ENCODE measurements at regions of chr1 and their contacts with region 1.

Region 1: GRCh38 chr1:2545759-2546514 is 10.2 kb upstream of the TNFRSF14 start:
- DNase-seq: peak; percentile 83 to 91 (median 86)
- ATAC-seq: peak; percentile 74
- H3K4me3 ChIP-seq: peak overlapping the region; percentile 88
- H3K4me3 Mint-ChIP-seq: peak overlapping the region; percentile 27 to 97 (median 94)
- H3K27ac ChIP-seq: peak overlapping the region; percentile 97
- H3K27ac Mint-ChIP-seq: peak overlapping the region in 8 of 9 donors; percentile 28 to 98 (median 97)
- H3K4me1 ChIP-seq: peaks cover 18 to 40% of the 10 kb centered on the region in 2 donors
- H3K4me1 Mint-ChIP-seq: peaks cover 0 to 41% (median 18%) of the 10 kb centered on the region in 7 donors
- H3K27me3 ChIP-seq: no peaks in the 10 kb centered on the region
- H3K27me3 Mint-ChIP-seq: peaks cover 0 to 16% (median 0%) of the 10 kb centered on the region in 5 donors

Region 2: GRCh38 chr1:2205191-2205952 is 340.6 kb before region 1 on chr1:
- CTCF ChIA-PET with region 1: no interaction called
- POLR2A ChIA-PET with region 1: no interaction called
- intact Hi-C with region 1: loop called (anchors 1 to 2 kb)
- DNase-seq: peak; percentile 86 to 94 (median 93)
- ATAC-seq: peak; percentile 98
- H3K4me3 ChIP-seq: peak overlapping the region; percentile 70
- H3K4me3 Mint-ChIP-seq: peak overlapping the region; percentile 53 to 79 (median 68)
- H3K27ac ChIP-seq: peak overlapping the region; percentile 60
- H3K27ac Mint-ChIP-seq: peak overlapping the region in 5 of 9 donors; percentile 17 to 65 (median 56)
- H3K4me1 ChIP-seq: peaks cover 0 to 6% of the 10 kb centered on the region in 2 donors
- H3K4me1 Mint-ChIP-seq: peaks cover 0 to 9% (median 4%) of the 10 kb centered on the region in 7 donors
- H3K27me3 ChIP-seq: no peaks in the 10 kb centered on the region
- H3K27me3 Mint-ChIP-seq: peaks cover 0 to 4% (median 0%) of the 10 kb centered on the region in 5 donors

Region 3: DNA sequence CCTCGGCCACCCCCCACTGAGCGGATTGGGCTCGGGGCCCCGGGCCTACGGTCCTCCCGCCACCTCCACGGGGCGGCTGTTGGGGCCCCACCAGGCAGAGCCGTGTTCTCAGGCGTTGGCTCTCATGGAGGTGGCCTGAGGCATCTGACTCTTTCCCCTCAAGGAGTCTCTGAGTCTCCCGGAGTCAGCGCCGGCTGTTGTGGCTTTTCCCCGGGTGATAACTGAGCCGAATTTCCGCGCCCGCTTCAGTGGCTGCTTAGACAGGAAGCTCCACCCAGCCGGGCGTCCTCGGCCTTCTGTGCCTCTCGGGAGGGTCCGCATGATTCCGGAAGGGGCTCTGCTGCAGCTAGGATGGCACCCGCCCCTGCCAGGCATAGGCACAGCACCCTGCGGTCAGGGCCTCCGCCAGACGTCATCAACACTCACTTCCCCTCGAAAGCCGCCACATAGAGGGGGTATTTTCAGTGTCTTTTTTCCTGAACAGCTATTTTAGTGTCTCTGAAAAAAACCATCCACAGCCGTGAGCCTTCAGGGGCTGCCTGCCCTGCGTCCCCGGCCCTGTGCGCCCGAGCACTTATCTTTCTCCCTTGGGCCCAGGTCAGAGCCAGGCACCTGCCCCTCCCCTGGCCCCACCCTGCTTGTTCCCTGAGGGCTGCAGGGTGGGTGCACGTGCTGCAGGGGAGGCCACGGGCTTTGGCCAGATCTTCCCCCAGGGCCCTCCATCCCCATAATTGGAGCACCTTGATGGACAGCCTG is 244.9 kb before region 1 on chr1:
- CTCF ChIA-PET with region 1: no interaction called
- POLR2A ChIA-PET with region 1: no interaction called
- intact Hi-C with region 1: loop called in 1 of 2 experiments (anchors 5 kb)
- DNase-seq: peak; percentile 69 to 98 (median 97)
- ATAC-seq: peak; percentile 90
- H3K4me3 ChIP-seq: peak overlapping the region; percentile 77
- H3K4me3 Mint-ChIP-seq: peak overlapping the region; percentile 79 to 89 (median 85)
- H3K27ac ChIP-seq: peak overlapping the region; percentile 98
- H3K27ac Mint-ChIP-seq: peak overlapping the region; percentile 91 to 99 (median 99)
- H3K4me1 ChIP-seq: peaks cover 36 to 54% of the 10 kb centered on the region in 2 donors
- H3K4me1 Mint-ChIP-seq: peaks cover 14 to 72% (median 42%) of the 10 kb centered on the region in 7 donors
- H3K27me3 ChIP-seq: no peaks in the 10 kb centered on the region
- H3K27me3 Mint-ChIP-seq: no peaks in the 10 kb centered on the region

Region 4: DNA sequence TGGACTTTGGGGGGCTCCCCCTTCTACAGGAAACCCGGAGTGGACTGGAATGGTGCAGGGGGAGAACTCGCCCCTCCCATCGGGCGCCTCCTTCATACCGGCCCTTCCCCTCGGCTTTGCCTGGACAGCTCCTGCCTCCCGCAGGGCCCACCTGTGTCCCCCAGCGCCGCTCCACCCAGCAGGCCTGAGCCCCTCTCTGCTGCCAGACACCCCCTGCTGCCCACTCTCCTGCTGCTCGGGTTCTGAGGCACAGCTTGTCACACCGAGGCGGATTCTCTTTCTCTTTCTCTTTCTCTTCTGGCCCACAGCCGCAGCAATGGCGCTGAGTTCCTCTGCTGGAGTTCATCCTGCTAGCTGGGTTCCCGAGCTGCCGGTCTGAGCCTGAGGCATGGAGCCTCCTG is 10.3 kb after region 1 on chr1 and contains the start of gene TNFRSF14:
- CTCF ChIA-PET with region 1: interaction called, 7 read pairs
- POLR2A ChIA-PET with region 1: interaction called, 15 read pairs
- intact Hi-C with region 1: loop called (anchors 1 kb)
- DNase-seq: peak; percentile 47 to 82 (median 75)
- ATAC-seq: peak; percentile 76
- H3K4me3 ChIP-seq: peak within 1 kb of the TSS; percentile 83
- H3K4me3 Mint-ChIP-seq: peak within 1 kb of the TSS; percentile 89 to 100 (median 99)
- H3K27ac ChIP-seq: peak within 1 kb of the TSS; percentile 93
- H3K27ac Mint-ChIP-seq: peak within 1 kb of the TSS; percentile 89 to 99 (median 99)
- H3K4me1 ChIP-seq: peaks cover 25 to 28% of the 10 kb centered on the region in 2 donors
- H3K4me1 Mint-ChIP-seq: peaks cover 12 to 42% (median 36%) of the 10 kb centered on the region in 7 donors
- H3K27me3 ChIP-seq: no peaks in the 10 kb centered on the region
- H3K27me3 Mint-ChIP-seq: no peaks in the 10 kb centered on the region
- total RNA-seq, gene TNFRSF14: 182 to 253 (median 204) TPM

Region 5: DNA sequence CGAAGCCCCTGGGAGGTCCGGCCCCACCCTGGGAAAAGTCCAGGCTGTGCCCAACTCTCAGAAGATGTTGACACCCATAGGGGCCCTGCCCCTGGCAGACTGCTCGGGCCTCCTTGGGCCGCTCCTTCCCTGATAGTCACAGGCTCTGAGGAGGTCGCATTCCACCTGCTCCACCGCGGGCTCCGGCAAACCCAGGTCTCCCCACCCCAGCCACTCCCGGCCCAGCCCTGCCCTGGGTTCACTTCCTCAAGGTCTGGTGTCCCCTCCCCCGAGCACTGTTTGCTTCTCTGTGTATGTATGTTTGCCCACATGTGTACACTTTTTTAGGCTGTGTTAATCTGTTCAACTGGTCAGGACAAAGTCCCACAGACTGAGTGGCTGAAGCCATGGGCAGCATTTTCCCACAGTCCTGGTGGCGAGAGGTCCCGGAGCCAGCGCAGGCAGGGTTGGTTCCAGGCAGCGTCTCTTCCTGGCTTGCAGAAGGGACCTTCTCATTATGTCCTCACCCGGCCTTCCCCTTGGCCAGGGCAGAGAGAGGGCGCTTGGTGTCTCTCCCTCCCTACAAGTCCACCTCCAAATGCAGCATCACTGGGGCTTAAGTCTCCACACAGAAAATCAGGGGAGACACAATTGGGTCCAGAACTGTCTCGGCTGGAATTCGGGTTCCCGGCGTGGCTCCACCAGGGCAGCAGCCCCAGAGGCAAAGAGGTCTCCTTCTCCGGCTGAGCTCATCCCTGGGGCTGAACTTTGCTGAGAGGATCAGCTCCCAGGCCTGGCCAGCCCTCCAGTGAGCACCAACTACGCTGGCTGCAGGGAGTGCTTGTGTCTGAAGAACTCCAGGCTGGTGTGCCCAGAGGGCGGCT is 30.1 kb after region 1 on chr1:
- CTCF ChIA-PET with region 1: no interaction called
- POLR2A ChIA-PET with region 1: interaction called, 6 read pairs
- intact Hi-C with region 1: loop called (anchors 1 kb)
- DNase-seq: no peak
- ATAC-seq: no peak
- H3K4me3 ChIP-seq: no peak overlapping the region
- H3K4me3 Mint-ChIP-seq: peak overlapping the region in 3 of 10 donors; percentile 25 to 76 (median 35)
- H3K27ac ChIP-seq: peak overlapping the region; percentile 8
- H3K27ac Mint-ChIP-seq: peak overlapping the region in 7 of 9 donors; percentile 43 to 96 (median 62)
- H3K4me1 ChIP-seq: peaks cover 20 to 33% of the 10 kb centered on the region in 2 donors
- H3K4me1 Mint-ChIP-seq: peaks cover 23 to 59% (median 48%) of the 10 kb centered on the region in 7 donors
- H3K27me3 ChIP-seq: no peaks in the 10 kb centered on the region
- H3K27me3 Mint-ChIP-seq: no peaks in the 10 kb centered on the region

Region 6: GRCh38 chr1:2642560-2643413 is 96.8 kb after region 1 on chr1:
- CTCF ChIA-PET with region 1: no interaction called
- POLR2A ChIA-PET with region 1: interaction called, 3 read pairs
- intact Hi-C with region 1: loop called in 1 of 2 experiments (anchors 2 kb)
- DNase-seq: peak; percentile 92 to 97 (median 96)
- ATAC-seq: peak; percentile 89
- H3K4me3 ChIP-seq: peak overlapping the region; percentile 87
- H3K4me3 Mint-ChIP-seq: peak overlapping the region; percentile 85 to 96 (median 88)
- H3K27ac ChIP-seq: peak overlapping the region; percentile 97
- H3K27ac Mint-ChIP-seq: peak overlapping the region in 8 of 9 donors; percentile 76 to 93 (median 86)
- H3K4me1 ChIP-seq: peaks cover 9% of the 10 kb centered on the region in 2 donors
- H3K4me1 Mint-ChIP-seq: peaks cover 6 to 19% (median 15%) of the 10 kb centered on the region in 7 donors
- H3K27me3 ChIP-seq: no peaks in the 10 kb centered on the region
- H3K27me3 Mint-ChIP-seq: peaks cover 0 to 3% (median 0%) of the 10 kb centered on the region in 5 donors